ENCODE measurements at regions of chrX and their contacts with region 1.

Region 1: GRCh38 chrX:153609917-153610428 is 11.0 kb upstream of the CCNQ start:
- DNase-seq: peak; percentile 88
- H3K4me3 ChIP-seq: peak overlapping the region; percentile 35 to 37; a peak in 2 of 4 replicates
- H3K27ac ChIP-seq: peak overlapping the region in 1 of 2 experiments; percentile 64; a peak in 2 of 4 replicates
- H3K4me1 ChIP-seq: peaks cover 0 to 10% of the 10 kb centered on the region in 2 experiments; a peak in 1 of 4 replicates
- H3K27me3 ChIP-seq: peaks cover 55% of the 10 kb centered on the region
- CTCF ChIP-seq: peak; percentile 79
- EP300 ChIP-seq: no peak
- RAD21 ChIP-seq: peak; percentile 73

Region 2: DNA sequence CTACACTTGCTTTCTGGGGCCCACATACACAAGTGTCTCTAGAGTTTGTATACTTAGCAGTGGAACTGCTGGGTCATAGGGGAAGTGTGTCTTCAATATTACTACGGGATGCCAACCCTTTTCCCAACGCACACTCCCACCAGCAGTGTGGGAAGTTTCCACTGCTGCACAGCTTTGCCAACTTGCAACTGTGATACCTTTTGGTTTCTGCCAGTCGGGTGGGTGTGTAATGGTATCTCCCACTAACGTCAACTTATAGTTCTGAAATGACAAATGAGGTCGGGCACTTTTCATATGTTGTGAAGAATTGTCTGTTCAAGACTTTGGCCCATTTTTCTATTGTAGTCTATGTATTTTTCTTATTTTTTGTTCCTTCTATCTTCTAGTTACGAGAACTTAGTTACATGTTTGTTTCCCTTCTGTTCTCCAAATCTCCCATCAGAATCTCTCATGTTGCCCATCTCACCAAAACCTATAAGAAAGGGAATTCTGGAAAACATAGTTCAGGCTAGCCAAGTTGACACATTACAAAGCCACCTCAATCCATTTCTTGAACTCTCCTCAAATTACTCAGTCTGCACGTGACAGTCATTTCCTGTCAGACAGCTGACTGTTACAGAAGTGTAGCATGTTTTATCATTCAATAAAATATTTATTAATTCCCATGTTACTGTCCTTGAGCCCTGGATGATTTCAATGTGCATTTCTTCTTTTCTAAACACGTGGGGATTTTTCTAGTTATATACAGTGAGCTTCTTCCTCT is 239.5 kb before region 1 on chrX:
- CTCF ChIA-PET with region 1: no interaction called
- POLR2A ChIA-PET with region 1: no interaction called
- DNase-seq: no peak
- H3K4me3 ChIP-seq: no peak overlapping the region
- H3K27ac ChIP-seq: no peak overlapping the region
- H3K4me1 ChIP-seq: no peaks in the 10 kb centered on the region
- H3K27me3 ChIP-seq: peaks cover 15% of the 10 kb centered on the region
- CTCF ChIP-seq: no peak
- EP300 ChIP-seq: no peak
- RAD21 ChIP-seq: no peak

Region 3: DNA sequence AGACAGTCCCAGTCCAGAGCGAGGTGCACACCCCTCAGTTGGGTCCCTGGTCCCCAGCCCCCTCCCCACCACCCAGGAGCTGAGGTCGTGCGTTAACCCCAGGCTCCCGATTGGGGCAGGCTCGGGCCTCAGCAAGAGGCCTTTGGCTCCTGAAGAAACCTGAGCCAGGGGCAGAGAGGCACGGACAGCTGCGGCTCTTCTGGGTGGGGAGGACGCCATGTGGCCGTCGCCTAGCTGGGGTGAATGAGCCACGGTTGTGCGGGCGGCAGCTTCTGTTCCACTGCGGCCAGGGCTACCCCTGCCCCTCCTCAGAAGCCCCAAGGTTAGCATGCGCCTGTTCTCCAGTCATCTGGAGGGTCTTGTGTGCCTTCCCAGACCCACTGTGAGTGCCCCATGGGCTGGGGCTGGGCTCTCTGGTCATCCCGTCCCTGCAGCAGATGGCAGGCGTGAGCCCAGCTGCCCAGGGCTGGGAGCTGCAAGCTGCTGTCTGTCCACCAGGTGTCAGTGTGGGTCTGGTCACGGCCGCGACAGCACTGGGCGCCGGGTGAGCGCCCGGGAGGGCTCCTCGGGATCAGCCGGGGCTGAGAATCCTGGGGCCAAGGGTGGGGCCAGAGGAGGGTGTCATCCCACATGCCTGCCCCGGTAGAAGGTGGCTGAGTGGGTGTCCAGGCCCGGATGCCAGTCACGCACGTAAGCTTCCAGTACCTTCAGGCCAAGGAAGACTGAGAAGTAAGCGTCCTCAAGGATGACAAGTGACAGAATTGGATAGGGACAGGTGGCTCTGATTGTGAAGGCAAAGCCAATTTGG is 70.6 kb before region 1 on chrX:
- CTCF ChIA-PET with region 1: interaction called, 15 read pairs
- POLR2A ChIA-PET with region 1: no interaction called
- DNase-seq: peak; percentile 88
- H3K4me3 ChIP-seq: peak overlapping the region in 1 of 2 experiments; percentile 37; a peak in 1 of 4 replicates
- H3K27ac ChIP-seq: peak overlapping the region in 1 of 2 experiments; percentile 95; a peak in 2 of 4 replicates
- H3K4me1 ChIP-seq: peaks cover 0 to 59% of the 10 kb centered on the region in 2 experiments; a peak in 1 of 4 replicates
- H3K27me3 ChIP-seq: peaks cover 41% of the 10 kb centered on the region
- CTCF ChIP-seq: peak; percentile 91
- EP300 ChIP-seq: no peak
- RAD21 ChIP-seq: peak; percentile 77

Region 4: GRCh38 chrX:153599192-153600031 is 10.6 kb before region 1 on chrX:
- CTCF ChIA-PET with region 1: interaction called, 35 read pairs
- POLR2A ChIA-PET with region 1: interaction called, 3 read pairs
- DNase-seq: peak; percentile 95
- H3K4me3 ChIP-seq: peak overlapping the region; percentile 63 to 69
- H3K27ac ChIP-seq: peak overlapping the region in 1 of 2 experiments; percentile 16; a peak in 1 of 4 replicates
- H3K4me1 ChIP-seq: peaks cover 0 to 9% of the 10 kb centered on the region in 2 experiments; a peak in 1 of 4 replicates
- H3K27me3 ChIP-seq: peaks cover 19% of the 10 kb centered on the region
- CTCF ChIP-seq: no peak
- EP300 ChIP-seq: no peak
- RAD21 ChIP-seq: no peak

Region 5: GRCh38 chrX:153636623-153637115 is 26.7 kb after region 1 on chrX:
- CTCF ChIA-PET with region 1: interaction called, 10 read pairs
- POLR2A ChIA-PET with region 1: no interaction called
- DNase-seq: peak; percentile 12
- H3K4me3 ChIP-seq: no peak overlapping the region
- H3K27ac ChIP-seq: no peak overlapping the region
- H3K4me1 ChIP-seq: peaks cover 0 to 22% of the 10 kb centered on the region in 2 experiments; a peak in 1 of 4 replicates
- H3K27me3 ChIP-seq: peaks cover 50% of the 10 kb centered on the region
- CTCF ChIP-seq: 0 out of 2 replicates have a peak, but pooled peaks have one; percentile 5
- EP300 ChIP-seq: no peak
- RAD21 ChIP-seq: no peak

Region 6: GRCh38 chrX:153649178-153649914 is 39.4 kb after region 1 on chrX:
- CTCF ChIA-PET with region 1: interaction called, 22 read pairs
- POLR2A ChIA-PET with region 1: no interaction called
- DNase-seq: peak; percentile 84
- H3K4me3 ChIP-seq: no peak overlapping the region
- H3K27ac ChIP-seq: no peak overlapping the region
- H3K4me1 ChIP-seq: peaks cover 0 to 3% of the 10 kb centered on the region in 2 experiments; a peak in 1 of 4 replicates
- H3K27me3 ChIP-seq: peaks cover 37% of the 10 kb centered on the region
- CTCF ChIP-seq: peak; percentile 46
- EP300 ChIP-seq: no peak
- RAD21 ChIP-seq: peak; percentile 66

Region 7: DNA sequence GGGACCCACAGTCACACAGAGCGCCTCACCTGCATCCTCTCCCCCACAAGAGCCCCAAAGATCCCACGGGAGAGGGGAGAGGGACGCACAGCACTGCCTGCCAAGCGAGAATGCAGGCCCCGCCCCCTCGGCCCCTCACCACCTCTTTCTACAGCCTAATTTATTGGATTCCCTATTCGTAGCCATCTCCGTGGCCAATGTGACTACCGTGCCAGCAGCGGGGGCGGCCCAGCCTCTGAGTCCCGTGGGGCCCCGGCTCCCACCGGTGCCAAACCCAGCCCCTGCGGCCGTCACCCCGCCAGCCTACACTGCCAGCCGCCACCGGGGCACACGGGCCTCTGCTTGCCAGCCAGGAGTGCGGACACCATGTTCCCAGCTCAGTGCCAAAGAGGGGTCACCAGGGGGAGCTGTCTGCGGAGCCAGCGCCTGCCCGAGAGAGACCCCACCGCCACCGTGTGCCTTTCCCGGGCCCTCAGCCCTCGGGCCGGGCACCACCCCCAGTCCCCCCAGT is 134.3 kb after region 1 on chrX:
- CTCF ChIA-PET with region 1: no interaction called
- POLR2A ChIA-PET with region 1: no interaction called
- DNase-seq: peak; percentile 65
- H3K4me3 ChIP-seq: no peak overlapping the region
- H3K27ac ChIP-seq: no peak overlapping the region
- H3K4me1 ChIP-seq: no peaks in the 10 kb centered on the region; a peak in 1 of 4 replicates
- H3K27me3 ChIP-seq: no peaks in the 10 kb centered on the region; the same call in none of the 2 replicates
- CTCF ChIP-seq: no peak
- EP300 ChIP-seq: no peak
- RAD21 ChIP-seq: no peak

Measured in SK-N-SH (cell line).